ENCODE measurements at regions of chr17 and their contacts with region 1.

Region 1: GRCh38 chr17:78670850-78671725 is 93.9 kb upstream of the DNAH17 start:
- DNase-seq: no peak
- ATAC-seq: no peak
- H3K4me3 ChIP-seq: no peak overlapping the region
- H3K27ac ChIP-seq: no peak overlapping the region
- H3K4me1 ChIP-seq: peaks cover 4% of the 10 kb centered on the region; the same call in 1 of the 2 replicates
- H3K27me3 ChIP-seq: no peaks in the 10 kb centered on the region
- CTCF ChIP-seq: no peak

Region 2: GRCh38 chr17:78526231-78527025 is 144.7 kb before region 1 on chr17:
- CTCF ChIA-PET with region 1: no interaction called
- POLR2A ChIA-PET with region 1: no interaction called
- intact Hi-C with region 1: no loop called
- DNase-seq: peak; percentile 22
- ATAC-seq: peak; percentile 33; the same call in 1 of the 2 replicates
- H3K4me3 ChIP-seq: no peak overlapping the region
- H3K27ac ChIP-seq: no peak overlapping the region
- H3K4me1 ChIP-seq: no peaks in the 10 kb centered on the region
- H3K27me3 ChIP-seq: no peaks in the 10 kb centered on the region
- CTCF ChIP-seq: no peak

Region 3: DNA sequence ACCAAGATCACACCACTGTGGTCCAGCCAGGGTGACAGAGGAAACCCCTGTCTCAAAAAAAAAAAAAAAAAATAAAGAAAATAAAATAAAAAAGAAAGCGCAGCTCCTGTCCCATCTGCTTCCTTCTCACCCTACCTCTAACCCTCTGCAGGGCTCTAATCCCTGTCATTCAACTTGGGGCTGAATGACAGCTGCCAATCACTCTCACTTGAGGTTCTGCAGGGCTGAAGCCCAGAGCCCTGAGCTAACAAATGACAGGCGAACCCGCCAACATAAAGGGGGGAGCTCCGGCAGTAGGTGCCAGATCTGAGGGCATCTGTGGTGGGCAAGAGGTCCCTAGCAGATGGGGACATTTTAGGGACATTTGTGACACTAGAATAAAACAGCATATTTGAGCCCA is 447.8 kb after region 1 on chr17:
- CTCF ChIA-PET with region 1: no interaction called
- POLR2A ChIA-PET with region 1: interaction called, 18 read pairs
- intact Hi-C with region 1: no loop called
- DNase-seq: no peak
- ATAC-seq: no peak
- H3K4me3 ChIP-seq: no peak overlapping the region
- H3K27ac ChIP-seq: no peak overlapping the region
- H3K4me1 ChIP-seq: peaks cover 13% of the 10 kb centered on the region
- H3K27me3 ChIP-seq: peaks cover 91% of the 10 kb centered on the region
- CTCF ChIP-seq: no peak